Activated CD8-positive, alpha-beta T cell treated with anti-CD3 and anti-CD28 coated beads for 36 hours (primary cell): ENCODE measurements at regions of chr6 and their contacts with region 1.

Region 1: GRCh38 chr6:498795-499231 is 107.3 kb downstream of the IRF4 start:
- DNase-seq: peak; percentile 86
- ATAC-seq: peak; percentile 61
- H3K4me3 Mint-ChIP-seq: peak overlapping the region; percentile 73
- H3K27ac Mint-ChIP-seq: peak overlapping the region; percentile 96
- H3K4me1 Mint-ChIP-seq: peaks cover 84% of the 10 kb centered on the region
- H3K27me3 Mint-ChIP-seq: no peaks in the 10 kb centered on the region
- CTCF ChIP-seq: no peak

Region 2: GRCh38 chr6:399785-400534 is 98.9 kb before region 1 on chr6:
- CTCF ChIA-PET with region 1: interaction called, 9 read pairs
- POLR2A ChIA-PET with region 1: interaction called, 853 read pairs
- intact Hi-C with region 1: loop called (anchors 5 kb)
- DNase-seq: peak; percentile 84
- ATAC-seq: peak; percentile 48
- H3K4me3 Mint-ChIP-seq: peak overlapping the region; percentile 64
- H3K27ac Mint-ChIP-seq: peak overlapping the region; percentile 88
- H3K4me1 Mint-ChIP-seq: peaks cover 91% of the 10 kb centered on the region
- H3K27me3 Mint-ChIP-seq: no peaks in the 10 kb centered on the region
- CTCF ChIP-seq: no peak

Region 3: DNA sequence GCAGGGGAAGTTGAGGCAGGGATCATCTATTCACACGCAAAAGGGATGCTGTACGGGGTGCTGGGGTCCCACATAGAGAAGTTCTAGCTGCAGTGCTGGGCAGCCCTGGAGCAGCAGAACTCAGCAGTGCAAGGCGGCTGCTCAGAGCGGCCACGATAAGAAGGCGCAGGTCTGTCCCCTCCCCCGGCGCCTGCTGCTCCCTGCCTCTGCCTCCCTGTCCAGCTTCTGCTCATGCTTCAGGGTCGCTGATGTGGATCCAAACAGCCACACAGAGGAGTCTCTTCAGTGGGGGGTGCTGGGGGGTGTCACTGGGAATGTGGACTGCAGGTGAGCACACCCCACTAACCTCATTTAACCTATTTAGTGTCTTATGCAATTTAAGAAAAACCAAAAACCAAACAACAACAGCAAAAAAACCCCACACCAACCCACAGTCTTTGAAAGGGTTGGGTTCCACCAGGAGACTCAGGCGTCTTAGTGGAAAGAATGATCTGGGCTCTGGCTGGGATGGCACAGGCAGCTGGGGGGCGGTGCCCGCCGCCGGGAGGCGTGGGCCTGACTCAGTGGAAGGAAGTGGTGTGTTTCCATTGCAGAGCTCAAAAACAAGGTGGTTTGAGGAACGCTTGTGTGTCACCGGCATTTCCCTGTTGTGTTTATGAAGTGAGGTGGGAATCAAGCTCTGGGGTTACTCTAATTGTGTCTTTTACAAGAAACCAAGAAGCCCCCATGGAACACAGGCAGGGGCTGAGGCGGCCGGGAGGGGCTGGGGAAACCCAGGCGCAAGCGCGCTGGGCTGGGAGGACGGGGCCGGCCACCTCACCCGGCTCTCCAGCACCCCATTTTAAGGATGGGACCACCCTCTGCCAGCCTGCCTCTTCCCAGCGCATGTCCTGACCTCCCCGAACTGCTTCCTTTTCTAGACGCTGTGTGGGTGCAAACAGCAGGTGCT is 52.1 kb before region 1 on chr6:
- CTCF ChIA-PET with region 1: interaction called, 3 read pairs
- POLR2A ChIA-PET with region 1: interaction called, 37 read pairs
- intact Hi-C with region 1: loop called (anchors 2 kb)
- DNase-seq: peak; percentile 97
- ATAC-seq: peak; percentile 78
- H3K4me3 Mint-ChIP-seq: peak overlapping the region; percentile 68
- H3K27ac Mint-ChIP-seq: peak overlapping the region; percentile 97
- H3K4me1 Mint-ChIP-seq: peaks cover 48% of the 10 kb centered on the region
- H3K27me3 Mint-ChIP-seq: no peaks in the 10 kb centered on the region
- CTCF ChIP-seq: no peak

Region 4: GRCh38 chr6:484086-484745 is 14.6 kb before region 1 on chr6:
- CTCF ChIA-PET with region 1: interaction called, 9 read pairs
- POLR2A ChIA-PET with region 1: interaction called, 51 read pairs
- intact Hi-C with region 1: loop called (anchors 2 kb)
- DNase-seq: peak; percentile 65
- ATAC-seq: peak; percentile 85
- H3K4me3 Mint-ChIP-seq: peak overlapping the region; percentile 7
- H3K27ac Mint-ChIP-seq: peak overlapping the region; percentile 93
- H3K4me1 Mint-ChIP-seq: peaks cover 79% of the 10 kb centered on the region
- H3K27me3 Mint-ChIP-seq: no peaks in the 10 kb centered on the region
- CTCF ChIP-seq: no peak

Region 5: DNA sequence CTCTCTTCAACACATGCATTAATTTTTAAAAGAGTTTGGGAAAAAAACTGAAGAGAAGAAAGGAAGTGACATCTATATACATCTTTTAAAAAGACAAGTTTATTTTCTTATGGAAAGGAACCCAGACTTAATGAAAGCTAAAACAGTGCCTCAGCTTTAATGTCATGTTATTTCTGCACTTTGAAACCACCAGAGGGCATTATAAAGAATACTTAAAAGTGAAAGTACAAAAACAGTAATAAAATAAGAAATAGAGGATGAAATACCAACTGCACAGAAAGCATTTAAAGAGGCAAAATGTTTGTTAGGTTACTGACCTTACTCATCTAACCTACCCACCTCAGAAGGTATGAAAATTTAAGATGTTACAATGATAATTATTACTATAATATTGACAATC is 59.3 kb after region 1 on chr6:
- CTCF ChIA-PET with region 1: no interaction called
- POLR2A ChIA-PET with region 1: interaction called, 4 read pairs
- intact Hi-C with region 1: loop called (anchors 2 kb)
- DNase-seq: no peak
- ATAC-seq: no peak
- H3K4me3 Mint-ChIP-seq: no peak overlapping the region
- H3K27ac Mint-ChIP-seq: peak overlapping the region; percentile 83
- H3K4me1 Mint-ChIP-seq: peaks cover 47% of the 10 kb centered on the region
- H3K27me3 Mint-ChIP-seq: no peaks in the 10 kb centered on the region
- CTCF ChIP-seq: peak; percentile 59

Region 6: DNA sequence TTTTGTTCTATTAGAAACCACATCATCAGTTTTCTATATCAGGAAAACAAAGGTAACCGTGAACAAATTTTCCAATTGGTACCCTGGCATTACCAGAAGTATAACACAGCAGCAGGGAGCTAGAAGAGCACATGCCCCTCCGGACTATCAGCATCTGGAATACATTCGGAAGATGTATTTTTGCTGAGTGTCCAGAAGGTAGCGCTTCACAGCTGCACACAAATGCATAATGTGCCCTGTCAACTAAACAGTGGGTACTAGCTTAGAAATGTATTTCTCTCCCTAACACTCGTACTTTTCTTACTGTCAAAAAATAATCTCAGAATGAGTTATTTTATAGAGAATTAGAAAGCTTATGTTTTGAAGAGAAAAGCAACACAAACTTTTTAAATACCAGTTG is 80.5 kb after region 1 on chr6:
- CTCF ChIA-PET with region 1: no interaction called
- POLR2A ChIA-PET with region 1: no interaction called
- intact Hi-C with region 1: no loop called
- DNase-seq: no peak
- ATAC-seq: no peak
- H3K4me3 Mint-ChIP-seq: no peak overlapping the region
- H3K27ac Mint-ChIP-seq: no peak overlapping the region
- H3K4me1 Mint-ChIP-seq: peaks cover 22% of the 10 kb centered on the region
- H3K27me3 Mint-ChIP-seq: no peaks in the 10 kb centered on the region
- CTCF ChIP-seq: no peak